Mammary epithelial cell (primary cell): ENCODE measurements at regions of chr3 and their contacts with region 1.

Region 1: GRCh38 chr3:36957862-36958686 is 13.2 kb upstream of the TRANK1 start:
- DNase-seq: peak; percentile 95
- H3K4me3 ChIP-seq: peak overlapping the region; percentile 17 to 45 (median 32)
- H3K27ac ChIP-seq: peak overlapping the region; percentile 99
- H3K4me1 ChIP-seq: peaks cover 17% of the 10 kb centered on the region
- H3K27me3 ChIP-seq: no peaks in the 10 kb centered on the region
- CTCF ChIP-seq: no peak

Region 2: DNA sequence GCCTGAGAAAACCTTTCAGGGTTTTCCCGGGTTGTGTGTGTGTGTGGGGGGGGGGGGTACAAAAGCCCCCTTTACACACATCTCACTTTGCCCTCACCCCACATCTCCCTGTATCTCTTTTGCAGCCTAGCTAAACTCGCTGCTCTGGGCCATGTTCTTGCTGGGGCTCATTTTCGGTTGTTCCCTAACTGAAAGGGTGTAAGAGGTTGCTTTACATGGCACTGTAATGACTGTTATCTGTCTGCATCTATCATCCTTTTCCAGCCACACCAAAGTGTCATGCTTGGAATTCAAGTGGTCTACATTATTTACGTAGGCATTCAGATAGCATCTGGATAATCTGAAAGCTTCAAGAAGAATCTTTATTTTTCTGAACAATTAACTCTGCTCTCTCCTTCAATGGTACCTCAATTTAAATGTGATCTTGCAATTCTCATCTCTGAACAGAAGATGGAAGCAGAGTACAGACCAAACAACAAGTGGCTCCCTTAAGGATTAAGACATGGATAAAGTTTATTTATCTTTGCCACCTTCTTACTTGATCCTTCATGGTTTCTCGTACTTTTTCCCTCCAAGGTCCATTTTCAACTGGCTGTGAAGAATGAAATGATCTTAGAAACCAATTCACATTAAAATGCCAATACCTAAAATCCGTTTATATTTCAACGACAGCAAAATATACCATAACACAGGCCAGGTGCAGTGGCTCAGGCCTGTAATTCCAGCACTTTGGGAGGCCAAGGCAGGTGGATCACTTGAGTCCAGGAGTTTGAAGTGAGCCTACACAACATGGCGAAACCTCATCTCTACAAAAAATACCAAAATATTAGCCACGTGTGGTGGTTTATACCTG is 228.6 kb before region 1 on chr3:
- CTCF ChIA-PET with region 1: no interaction called
- dilution Hi-C with region 1: no loop called
- in situ Hi-C with region 1: no loop called
- intact Hi-C with region 1: loop called (anchors 1 kb)
- DNase-seq: peak; percentile 28
- H3K4me3 ChIP-seq: no peak overlapping the region
- H3K27ac ChIP-seq: no peak overlapping the region
- H3K4me1 ChIP-seq: no peaks in the 10 kb centered on the region
- H3K27me3 ChIP-seq: no peaks in the 10 kb centered on the region
- CTCF ChIP-seq: peak; percentile 66 to 69

Region 3: GRCh38 chr3:36792342-36792741 is 165.7 kb before region 1 on chr3:
- CTCF ChIA-PET with region 1: no interaction called
- dilution Hi-C with region 1: no loop called
- in situ Hi-C with region 1: no loop called
- intact Hi-C with region 1: loop called (anchors 1 kb)
- DNase-seq: peak; percentile 27
- H3K4me3 ChIP-seq: no peak overlapping the region
- H3K27ac ChIP-seq: no peak overlapping the region
- H3K4me1 ChIP-seq: no peaks in the 10 kb centered on the region
- H3K27me3 ChIP-seq: no peaks in the 10 kb centered on the region
- CTCF ChIP-seq: peak; percentile 54 to 76

Region 4: GRCh38 chr3:36868614-36869436 is 89.2 kb before region 1 on chr3:
- CTCF ChIA-PET with region 1: interaction called, 3 read pairs
- dilution Hi-C with region 1: no loop called
- in situ Hi-C with region 1: no loop called
- intact Hi-C with region 1: loop called (anchors 1 kb)
- DNase-seq: peak; percentile 45
- H3K4me3 ChIP-seq: no peak overlapping the region
- H3K27ac ChIP-seq: no peak overlapping the region
- H3K4me1 ChIP-seq: no peaks in the 10 kb centered on the region
- H3K27me3 ChIP-seq: no peaks in the 10 kb centered on the region
- CTCF ChIP-seq: peak; percentile 74 to 82

Region 5: DNA sequence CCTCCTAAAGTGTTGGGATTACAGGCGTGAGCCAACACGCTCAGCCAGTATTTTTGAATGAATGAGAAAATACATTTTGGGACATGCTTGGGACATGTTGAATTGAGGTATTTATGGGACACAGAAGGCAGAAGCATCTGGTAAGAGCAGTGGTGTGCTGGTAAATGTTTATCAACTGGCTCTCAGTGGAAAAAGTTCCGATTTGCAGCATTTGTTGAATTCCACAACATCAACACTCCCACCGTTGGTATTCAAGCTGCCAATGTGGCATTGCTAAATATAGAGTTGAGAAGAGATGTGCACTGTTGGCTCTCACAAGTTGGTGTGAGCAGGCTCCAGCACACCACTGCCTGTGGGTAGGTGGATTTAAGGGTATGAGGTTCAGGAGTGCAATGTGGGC is 252.2 kb after region 1 on chr3:
- CTCF ChIA-PET with region 1: no interaction called
- dilution Hi-C with region 1: no loop called
- in situ Hi-C with region 1: no loop called
- intact Hi-C with region 1: loop called (anchors 1 kb)
- DNase-seq: peak; percentile 76
- H3K4me3 ChIP-seq: no peak overlapping the region
- H3K27ac ChIP-seq: peak overlapping the region; percentile 67
- H3K4me1 ChIP-seq: peaks cover 28% of the 10 kb centered on the region
- H3K27me3 ChIP-seq: no peaks in the 10 kb centered on the region
- CTCF ChIP-seq: no peak